Lower lobe of right lung (tissue), 2 donors: ENCODE measurements at regions of chr12 and their contacts with region 1.

Region 1: GRCh38 chr12:23055004-23055403 is 430.0 kb downstream of the ETNK1 start:
- DNase-seq: no peak
- ATAC-seq: no peak
- H3K4me3 ChIP-seq: no peak overlapping the region
- H3K27ac ChIP-seq: no peak overlapping the region
- H3K4me1 ChIP-seq: no peaks in the 10 kb centered on the region
- H3K27me3 ChIP-seq: no peaks in the 10 kb centered on the region
- CTCF ChIP-seq: peak; percentile 37

Region 2: DNA sequence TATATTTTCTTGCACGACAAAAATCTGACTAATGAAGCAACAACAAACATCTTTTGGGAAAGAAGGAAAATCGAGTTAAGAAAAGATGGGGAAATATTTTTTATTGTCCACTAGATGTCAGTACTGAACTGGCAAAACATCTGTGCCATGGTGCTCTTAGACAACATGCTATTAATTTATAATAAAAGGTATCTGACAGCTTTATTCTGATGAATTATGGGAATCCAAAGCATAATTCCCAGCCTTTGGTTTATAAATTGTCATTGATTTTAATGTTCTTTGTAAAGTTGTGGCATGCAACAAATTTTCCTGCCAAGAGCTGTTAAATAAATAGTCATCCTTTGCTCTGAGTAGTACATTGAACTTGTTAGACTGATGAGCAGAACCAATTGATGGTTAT is 198.8 kb before region 1 on chr12:
- intact Hi-C with region 1: loop called (anchors 10 kb)
- DNase-seq: no peak
- ATAC-seq: peak in 1 of 2 donors; percentile 51
- H3K4me3 ChIP-seq: no peak overlapping the region
- H3K27ac ChIP-seq: no peak overlapping the region
- H3K4me1 ChIP-seq: peaks cover 5% of the 10 kb centered on the region
- H3K27me3 ChIP-seq: no peaks in the 10 kb centered on the region
- CTCF ChIP-seq: peak; percentile 53

Region 3: DNA sequence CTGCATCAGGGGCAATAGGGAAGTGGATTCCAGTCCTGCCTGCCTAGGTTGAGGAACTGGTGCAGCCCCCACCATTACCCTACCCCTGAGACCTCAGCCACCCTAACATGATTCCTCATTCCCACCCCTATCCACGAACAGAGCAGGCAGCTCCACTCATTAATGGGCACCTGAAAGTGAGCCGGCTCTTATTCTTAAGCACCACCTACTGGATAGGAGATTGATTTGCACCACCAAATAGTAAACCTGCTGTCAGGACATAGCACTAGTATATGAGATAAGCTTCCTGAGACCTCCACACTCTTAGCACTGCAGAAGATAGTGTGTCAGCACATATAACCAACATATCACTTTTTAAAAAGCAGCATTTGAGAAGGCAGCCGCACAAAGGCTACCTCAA is 321.2 kb after region 1 on chr12:
- intact Hi-C with region 1: no loop called
- DNase-seq: no peak
- ATAC-seq: no peak
- H3K4me3 ChIP-seq: no peak overlapping the region
- H3K27ac ChIP-seq: no peak overlapping the region
- H3K4me1 ChIP-seq: no peaks in the 10 kb centered on the region
- H3K27me3 ChIP-seq: no peaks in the 10 kb centered on the region
- CTCF ChIP-seq: no peak